ENCODE measurements at regions of chr15 and their contacts with region 1.

Region 1: GRCh38 chr15:73601451-73602445 is 31.4 kb downstream of the NPTN start:
- DNase-seq: peak; percentile 60
- H3K4me3 Mint-ChIP-seq: no peak overlapping the region
- H3K27ac Mint-ChIP-seq: no peak overlapping the region
- H3K4me1 Mint-ChIP-seq: no peaks in the 10 kb centered on the region
- H3K27me3 Mint-ChIP-seq: no peaks in the 10 kb centered on the region
- CTCF ChIP-seq: no peak

Region 2: GRCh38 chr15:73522011-73522410 is 79.7 kb before region 1 on chr15:
- CTCF ChIA-PET with region 1: no interaction called
- POLR2A ChIA-PET with region 1: no interaction called
- intact Hi-C with region 1: no loop called
- DNase-seq: no peak
- H3K4me3 Mint-ChIP-seq: no peak overlapping the region
- H3K27ac Mint-ChIP-seq: no peak overlapping the region
- H3K4me1 Mint-ChIP-seq: peaks cover 11% of the 10 kb centered on the region
- H3K27me3 Mint-ChIP-seq: no peaks in the 10 kb centered on the region
- CTCF ChIP-seq: no peak

Region 3: GRCh38 chr15:73573572-73573971 is 28.2 kb before region 1 on chr15:
- CTCF ChIA-PET with region 1: no interaction called
- POLR2A ChIA-PET with region 1: interaction called, 10 read pairs
- intact Hi-C with region 1: no loop called
- DNase-seq: peak; percentile 97
- H3K4me3 Mint-ChIP-seq: no peak overlapping the region
- H3K27ac Mint-ChIP-seq: peak overlapping the region; percentile 88
- H3K4me1 Mint-ChIP-seq: peaks cover 39% of the 10 kb centered on the region
- H3K27me3 Mint-ChIP-seq: no peaks in the 10 kb centered on the region
- CTCF ChIP-seq: no peak

Region 4: DNA sequence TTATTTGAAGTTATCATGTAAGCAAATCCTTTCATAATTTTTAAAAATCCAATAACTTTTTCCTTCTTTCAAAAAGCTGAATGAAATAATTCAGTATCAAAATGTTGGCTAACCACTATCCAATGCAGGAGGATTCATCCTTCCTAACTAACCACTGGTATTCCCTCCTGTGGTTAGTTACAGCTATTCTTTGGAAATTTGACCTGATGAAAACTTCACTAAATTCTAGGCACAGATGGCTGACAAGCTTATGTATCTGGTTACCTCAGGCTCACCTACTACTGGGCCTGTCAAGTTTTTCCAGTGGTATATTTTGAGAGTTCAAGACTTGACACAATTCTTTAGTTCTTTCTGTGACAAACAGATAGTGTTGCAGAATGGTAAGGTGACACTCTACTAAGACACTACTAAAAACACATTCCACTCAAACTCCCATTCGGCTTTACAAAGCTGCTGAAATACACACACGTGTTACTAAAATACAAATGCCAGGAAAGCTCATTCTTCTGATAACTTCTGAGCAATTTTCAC is 15.6 kb after region 1 on chr15:
- CTCF ChIA-PET with region 1: interaction called, 8 read pairs
- POLR2A ChIA-PET with region 1: interaction called, 270 read pairs
- intact Hi-C with region 1: no loop called
- DNase-seq: no peak
- H3K4me3 Mint-ChIP-seq: no peak overlapping the region
- H3K27ac Mint-ChIP-seq: no peak overlapping the region
- H3K4me1 Mint-ChIP-seq: peaks cover 20% of the 10 kb centered on the region
- H3K27me3 Mint-ChIP-seq: no peaks in the 10 kb centered on the region
- CTCF ChIP-seq: no peak

Measured in MCF 10A (cell line).